ENCODE measurements at regions of chr16 and their contacts with region 1.

Region 1: DNA sequence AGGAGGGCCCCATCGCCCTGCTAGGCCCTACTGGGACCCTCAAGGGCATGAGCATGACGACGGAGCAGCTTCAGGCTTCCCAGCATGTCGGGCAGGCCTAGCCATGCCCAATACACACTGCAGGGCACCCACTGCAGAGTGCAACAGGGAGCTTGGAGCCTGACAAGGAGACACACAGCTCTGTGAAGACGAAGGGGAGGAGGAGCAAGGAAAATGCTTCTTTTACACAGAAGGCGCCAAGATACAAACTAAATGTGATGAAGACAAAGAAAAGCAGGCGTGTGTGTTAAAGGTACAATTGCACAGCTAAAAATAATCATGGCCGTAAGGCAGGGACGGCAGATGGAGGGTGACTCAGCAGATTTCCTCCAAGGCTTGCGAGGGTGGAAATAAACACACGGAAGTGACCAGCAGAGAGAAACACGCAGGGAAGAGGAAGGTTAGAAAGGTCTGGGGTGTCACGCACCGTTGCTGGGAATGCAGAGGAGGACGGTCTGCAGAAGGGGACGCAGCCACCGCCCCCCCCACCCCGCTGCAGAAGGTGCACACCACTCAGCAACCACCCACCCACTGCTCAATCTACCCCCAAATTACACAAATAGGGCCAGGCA is 108.5 kb downstream of the ZNF778 start:
- DNase-seq: no peak
- H3K4me3 Mint-ChIP-seq: peak overlapping the region; percentile 62
- H3K27ac Mint-ChIP-seq: peak overlapping the region; percentile 73
- H3K4me1 Mint-ChIP-seq: peaks cover 71% of the 10 kb centered on the region
- H3K27me3 Mint-ChIP-seq: no peaks in the 10 kb centered on the region

Region 2: DNA sequence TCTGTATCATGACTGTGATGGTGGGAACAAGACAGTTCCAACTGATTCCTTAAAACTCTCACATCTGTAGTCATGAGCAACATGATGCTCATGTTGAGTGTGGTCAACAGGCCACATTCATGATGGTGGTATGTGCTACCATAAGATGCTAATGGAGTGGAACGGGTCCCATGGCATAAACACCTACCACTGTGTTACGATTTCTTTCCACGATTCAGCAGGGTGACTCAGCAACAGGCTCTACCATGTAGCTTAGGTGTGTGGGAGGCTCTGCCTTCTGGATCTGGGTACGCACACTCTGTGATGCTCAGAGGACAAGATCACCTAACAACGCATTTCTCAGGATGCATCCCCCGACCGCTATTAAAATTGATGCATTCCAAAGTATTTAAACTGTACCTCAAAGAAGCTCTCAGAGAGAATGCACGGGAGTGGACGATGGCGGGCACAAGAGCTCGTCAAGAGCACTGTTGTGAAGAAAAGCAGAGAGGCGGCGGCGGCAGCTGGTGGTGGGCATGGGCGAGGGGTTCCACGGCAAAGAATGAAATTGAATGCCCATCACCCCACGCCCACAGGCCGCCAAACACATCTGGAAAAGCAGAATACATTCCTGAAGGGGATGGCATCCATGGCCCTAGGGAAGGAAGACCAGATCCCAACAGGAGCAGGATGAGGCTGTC is 24.9 kb after region 1 on chr16:
- intact Hi-C with region 1: loop called (anchors 1 kb)
- DNase-seq: no peak
- H3K4me3 Mint-ChIP-seq: peak overlapping the region; percentile 25
- H3K27ac Mint-ChIP-seq: peak overlapping the region; percentile 85
- H3K4me1 Mint-ChIP-seq: peaks cover 68% of the 10 kb centered on the region
- H3K27me3 Mint-ChIP-seq: no peaks in the 10 kb centered on the region

Region 3: DNA sequence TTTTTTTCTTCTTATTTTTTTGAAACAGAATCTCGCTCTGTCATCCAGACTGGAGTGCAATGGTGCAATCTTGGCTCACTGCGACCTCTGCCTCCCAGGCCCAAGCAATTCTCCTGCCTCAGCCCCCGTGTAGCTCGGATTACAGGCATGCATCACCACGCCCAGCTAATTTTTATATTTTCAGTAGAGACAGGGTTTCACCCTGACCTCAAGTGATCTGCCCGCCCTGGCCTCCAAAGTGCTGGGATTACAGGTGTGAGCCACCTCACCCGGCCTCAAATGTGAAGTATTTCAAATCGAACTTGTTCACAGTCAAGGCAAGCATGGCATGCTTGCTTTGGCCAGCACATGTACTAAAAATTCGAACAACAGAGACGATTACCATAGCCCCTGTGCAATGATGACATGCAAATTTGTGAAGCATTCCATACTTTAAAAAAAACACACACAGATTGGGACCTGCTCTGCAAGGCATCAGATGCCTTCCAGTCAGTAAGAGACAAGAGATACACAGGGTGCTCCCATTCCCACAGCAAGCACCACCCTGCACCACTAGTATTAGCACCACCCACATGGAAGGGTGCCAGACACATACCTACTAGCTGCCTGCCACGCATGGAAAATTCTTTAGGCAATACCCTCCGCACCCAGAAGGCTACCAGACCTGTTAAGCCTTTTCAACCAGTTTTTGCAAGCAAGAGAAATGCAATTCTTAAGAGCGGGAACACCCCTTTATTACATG is 117.2 kb after region 1 on chr16:
- intact Hi-C with region 1: loop called (anchors 5 kb)
- DNase-seq: no peak
- H3K4me3 Mint-ChIP-seq: peak overlapping the region; percentile 34
- H3K27ac Mint-ChIP-seq: peak overlapping the region; percentile 50
- H3K4me1 Mint-ChIP-seq: peaks cover 93% of the 10 kb centered on the region
- H3K27me3 Mint-ChIP-seq: no peaks in the 10 kb centered on the region

Region 4: GRCh38 chr16:89484923-89485679 is 159.1 kb after region 1 on chr16:
- intact Hi-C with region 1: loop called (anchors 2 kb)
- DNase-seq: no peak
- H3K4me3 Mint-ChIP-seq: peak overlapping the region; percentile 83
- H3K27ac Mint-ChIP-seq: peak overlapping the region; percentile 91
- H3K4me1 Mint-ChIP-seq: peaks cover 87% of the 10 kb centered on the region
- H3K27me3 Mint-ChIP-seq: no peaks in the 10 kb centered on the region